ENCODE measurements at regions of chr10 and their contacts with region 1.

Region 1: GRCh38 chr10:124802313-124802675 is 675 bp downstream of the ABRAXAS2 start:
- DNase-seq: peak; percentile 65
- ATAC-seq: peak; percentile 14
- H3K4me3 ChIP-seq: peak overlapping the region; percentile 69 to 97 (median 81)
- H3K4me3 Mint-ChIP-seq: peak overlapping the region; percentile 94
- H3K27ac ChIP-seq: peak overlapping the region; percentile 71 to 89
- H3K27ac Mint-ChIP-seq: peak overlapping the region; percentile 93
- H3K4me1 ChIP-seq: peaks cover 5 to 13% of the 10 kb centered on the region in 2 donors
- H3K4me1 Mint-ChIP-seq: peaks cover 17% of the 10 kb centered on the region
- H3K27me3 ChIP-seq: peaks cover 0 to 3% (median 0%) of the 10 kb centered on the region in 4 experiments
- H3K27me3 Mint-ChIP-seq: peaks cover 4% of the 10 kb centered on the region
- CTCF ChIP-seq: no peak

Region 2: GRCh38 chr10:124461438-124462347 is 340.6 kb before region 1 on chr10 and contains the start of gene LHPP:
- CTCF ChIA-PET with region 1: no interaction called
- POLR2A ChIA-PET with region 1: no interaction called
- intact Hi-C with region 1: loop called (anchors 5 kb)
- DNase-seq: peak; percentile 93
- ATAC-seq: peak; percentile 91
- H3K4me3 ChIP-seq: peak within 1 kb of the TSS in 4 of 5 experiments; percentile 43 to 71 (median 65)
- H3K4me3 Mint-ChIP-seq: peak within 1 kb of the TSS; percentile 97
- H3K27ac ChIP-seq: peak within 1 kb of the TSS; percentile 54 to 71
- H3K27ac Mint-ChIP-seq: peak within 1 kb of the TSS; percentile 98
- H3K4me1 ChIP-seq: peaks cover 23 to 35% of the 10 kb centered on the region in 2 donors
- H3K4me1 Mint-ChIP-seq: peaks cover 30% of the 10 kb centered on the region
- H3K27me3 ChIP-seq: peaks cover 0 to 3% (median under 1%) of the 10 kb centered on the region in 4 experiments
- H3K27me3 Mint-ChIP-seq: peaks cover 7% of the 10 kb centered on the region
- CTCF ChIP-seq: peak; percentile 35
- total RNA-seq, gene LHPP: 82.4 and 83.5 TPM in 2 replicates

Region 3: DNA sequence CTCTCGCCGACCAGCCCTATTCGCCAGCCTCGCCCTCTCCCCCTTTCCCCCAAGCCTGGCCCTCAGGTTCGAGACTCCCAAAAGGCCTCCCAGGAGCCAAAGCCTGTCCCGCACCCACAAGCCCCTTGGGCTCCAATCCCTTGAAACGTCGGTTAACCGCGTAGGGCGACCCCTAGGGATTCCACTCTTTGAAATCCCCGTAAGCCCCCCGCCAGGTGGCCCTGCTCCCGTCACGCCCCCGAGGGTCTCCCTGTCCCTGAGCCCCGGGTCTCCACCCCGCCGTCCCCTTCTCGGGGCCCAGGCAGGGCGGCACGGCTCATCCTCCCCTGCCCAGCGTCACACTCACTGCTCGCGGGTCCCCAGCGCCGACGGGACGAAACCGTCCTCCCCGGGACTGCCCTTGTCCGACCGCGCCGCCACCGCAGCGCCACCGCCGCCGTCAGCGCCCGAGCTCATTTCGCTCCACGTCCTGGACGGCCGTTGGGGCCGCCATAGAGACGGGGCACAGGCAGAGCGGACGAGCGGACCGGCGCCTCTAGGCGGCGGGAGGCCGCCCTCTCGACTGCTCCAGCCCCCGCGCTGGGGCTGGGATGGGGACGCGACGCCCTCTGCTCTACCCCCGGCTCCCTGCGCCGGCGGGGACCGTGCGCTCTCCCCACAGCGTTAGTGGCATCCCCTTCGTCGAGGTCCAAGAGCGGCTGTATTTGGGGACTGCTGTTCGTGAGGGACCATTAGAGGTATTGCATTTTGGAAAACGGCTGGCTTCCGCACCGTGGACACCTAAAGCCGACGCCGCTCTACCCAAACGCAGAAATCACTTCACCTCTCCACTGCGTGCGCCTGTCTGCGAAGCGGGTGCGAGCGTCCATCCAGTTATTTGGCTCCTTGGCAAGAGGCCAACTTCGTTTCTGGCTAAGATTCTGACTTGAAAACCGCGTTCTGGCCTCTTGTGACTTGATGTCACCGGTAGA is 10.6 kb before region 1 on chr10 and contains the start of gene EEF1AKMT2:
- CTCF ChIA-PET with region 1: interaction called, 3 read pairs
- POLR2A ChIA-PET with region 1: interaction called, 17 read pairs
- intact Hi-C with region 1: loop called (anchors 1 kb)
- DNase-seq: peak; percentile 91
- ATAC-seq: peak; percentile 97
- H3K4me3 ChIP-seq: peak within 1 kb of the TSS; percentile 75 to 98 (median 95)
- H3K4me3 Mint-ChIP-seq: peak within 1 kb of the TSS; percentile 100
- H3K27ac ChIP-seq: peak within 1 kb of the TSS; percentile 68 to 79
- H3K27ac Mint-ChIP-seq: peak within 1 kb of the TSS; percentile 99
- H3K4me1 ChIP-seq: peaks cover 4 to 10% of the 10 kb centered on the region in 2 donors
- H3K4me1 Mint-ChIP-seq: peaks cover 17% of the 10 kb centered on the region
- H3K27me3 ChIP-seq: no peaks in the 10 kb centered on the region
- H3K27me3 Mint-ChIP-seq: no peaks in the 10 kb centered on the region
- CTCF ChIP-seq: peak; percentile 18
- total RNA-seq, gene EEF1AKMT2: 15.0 and 15.4 TPM in 2 replicates

Region 4: GRCh38 chr10:124916585-124917427 is 114.5 kb after region 1 on chr10:
- CTCF ChIA-PET with region 1: no interaction called
- POLR2A ChIA-PET with region 1: interaction called, 3 read pairs
- intact Hi-C with region 1: loop called (anchors 1 kb)
- DNase-seq: peak; percentile 98
- ATAC-seq: peak; percentile 89
- H3K4me3 ChIP-seq: peak overlapping the region; percentile 63 to 87 (median 79)
- H3K4me3 Mint-ChIP-seq: peak overlapping the region; percentile 90
- H3K27ac ChIP-seq: peak overlapping the region; percentile 81 to 87
- H3K27ac Mint-ChIP-seq: peak overlapping the region; percentile 90
- H3K4me1 ChIP-seq: peaks cover 18 to 20% of the 10 kb centered on the region in 2 donors
- H3K4me1 Mint-ChIP-seq: peaks cover 37% of the 10 kb centered on the region
- H3K27me3 ChIP-seq: peaks cover 0 to 5% (median 3%) of the 10 kb centered on the region in 4 experiments
- H3K27me3 Mint-ChIP-seq: peaks cover 9% of the 10 kb centered on the region
- CTCF ChIP-seq: no peak

Measured in B cell (primary cell).